CD8-positive, alpha-beta memory T cell (primary cell): ENCODE measurements at regions of chrX and their contacts with region 1.

Region 1: DNA sequence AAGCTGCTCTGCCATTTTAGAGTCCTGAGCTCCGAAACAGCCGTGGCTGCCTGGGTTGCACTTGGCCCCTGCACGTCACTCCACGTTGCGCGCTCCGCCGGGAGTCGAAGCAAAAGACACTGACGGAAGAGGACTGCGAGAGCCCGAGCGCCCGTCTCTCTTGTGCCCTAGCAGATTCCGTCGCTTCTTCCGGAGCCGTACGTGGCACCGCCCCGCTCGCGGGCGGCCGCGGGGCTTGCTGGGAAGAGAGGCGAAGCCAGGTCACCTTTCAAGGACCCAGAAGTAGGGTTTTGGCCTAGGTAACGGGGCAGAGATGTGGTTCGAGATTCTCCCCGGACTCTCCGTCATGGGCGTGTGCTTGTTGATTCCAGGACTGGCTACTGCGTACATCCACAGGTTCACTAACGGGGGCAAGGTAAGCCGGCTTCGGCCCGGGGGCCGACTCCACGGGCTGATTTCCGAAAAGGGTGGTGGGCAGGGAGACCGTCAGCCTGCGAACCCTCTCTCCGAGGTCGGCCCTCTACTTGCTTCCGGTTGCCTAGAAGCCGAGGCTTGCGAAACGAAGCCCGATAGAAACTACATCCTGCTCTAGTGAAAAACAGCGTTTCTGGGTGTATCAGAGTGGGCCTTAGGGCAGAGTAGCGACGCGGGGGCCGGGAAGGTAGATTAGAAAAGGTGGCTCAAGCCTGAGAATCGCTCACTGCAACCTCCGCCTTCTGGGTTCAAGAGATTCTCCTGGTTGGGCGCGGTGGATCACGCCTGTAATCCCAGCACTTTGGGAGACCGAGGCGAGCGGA is at the starts of genes NDUFA1 and RNF113A:
- DNase-seq: peak; percentile 71 to 91 (median 85)
- H3K4me3 ChIP-seq: peak within 1 kb of the TSS; percentile 93
- H3K4me3 Mint-ChIP-seq: peak within 1 kb of the TSS; percentile 97 to 100 (median 99)
- H3K27ac ChIP-seq: peak within 1 kb of the TSS; percentile 95
- H3K27ac Mint-ChIP-seq: peak within 1 kb of the TSS; percentile 98 to 100 (median 99)
- H3K4me1 ChIP-seq: peaks cover 9% of the 10 kb centered on the region
- H3K4me1 Mint-ChIP-seq: peaks cover 26 to 29% (median 28%) of the 10 kb centered on the region in 3 donors
- H3K27me3 ChIP-seq: no peaks in the 10 kb centered on the region
- H3K27me3 Mint-ChIP-seq: peaks cover 0 to 2% of the 10 kb centered on the region in 2 donors
- total RNA-seq, gene NDUFA1: 97.3 to 98.5 TPM
- total RNA-seq, gene RNF113A: 22.9 to 25.1 TPM

Region 2: DNA sequence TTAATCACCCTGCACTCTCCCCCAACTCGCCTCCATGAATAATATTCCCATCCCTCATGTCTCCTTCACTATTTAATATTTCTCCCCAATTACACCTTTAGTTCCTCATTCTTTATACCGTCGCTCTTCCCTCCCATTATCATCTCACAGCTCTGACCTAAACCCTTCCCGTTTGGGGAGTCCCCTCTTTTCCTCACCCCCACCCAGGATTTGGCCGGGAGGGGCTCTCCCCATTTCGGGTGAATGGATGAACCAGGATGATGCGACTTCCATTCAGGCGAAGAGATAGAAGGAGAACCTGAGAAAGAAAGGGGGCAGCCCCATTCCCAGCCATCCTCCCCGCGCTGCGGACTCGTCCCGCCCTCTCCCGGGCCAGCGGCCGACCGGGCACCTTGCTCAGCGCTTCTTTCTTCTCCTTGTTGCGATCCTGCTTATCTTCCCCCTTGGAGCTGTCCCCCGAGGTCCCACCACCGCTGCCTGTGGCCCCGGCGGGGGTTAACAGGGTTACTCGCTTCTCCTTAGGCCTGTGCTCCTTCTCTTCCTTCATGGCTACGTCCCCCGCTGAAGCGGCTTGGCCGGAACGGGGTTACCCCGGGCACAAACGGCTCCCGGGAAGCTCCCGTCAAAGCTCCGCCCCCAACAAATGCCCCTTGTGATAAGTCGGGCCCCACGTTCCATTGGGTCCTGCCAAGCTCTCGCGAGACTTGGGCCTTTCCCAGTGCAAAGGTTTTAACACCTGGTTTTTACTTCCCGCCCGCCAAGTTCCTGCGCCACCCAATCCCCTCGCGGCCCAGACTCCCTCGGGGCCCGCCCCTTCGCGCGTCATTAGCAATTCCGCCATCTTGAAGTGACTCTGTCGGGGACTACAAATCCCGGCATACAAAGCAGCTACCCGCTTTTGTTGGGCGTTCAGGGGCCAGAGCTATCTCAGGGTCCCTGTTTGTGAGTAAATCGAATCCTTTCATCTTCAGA is 19.1 kb before region 1 on chrX and contains the start of gene UPF3B:
- CTCF ChIA-PET with region 1: interaction called, 6 read pairs
- POLR2A ChIA-PET with region 1: interaction called, 29 read pairs
- DNase-seq: peak; percentile 88 to 98 (median 93)
- H3K4me3 ChIP-seq: peak within 1 kb of the TSS; percentile 74
- H3K4me3 Mint-ChIP-seq: peak within 1 kb of the TSS; percentile 97 to 99 (median 99)
- H3K27ac ChIP-seq: peak within 1 kb of the TSS; percentile 91
- H3K27ac Mint-ChIP-seq: peak within 1 kb of the TSS; percentile 85 to 100 (median 98)
- H3K4me1 ChIP-seq: no peaks in the 10 kb centered on the region
- H3K4me1 Mint-ChIP-seq: peaks cover 14 to 37% (median 15%) of the 10 kb centered on the region in 3 donors
- H3K27me3 ChIP-seq: no peaks in the 10 kb centered on the region
- H3K27me3 Mint-ChIP-seq: peaks cover 7 to 10% of the 10 kb centered on the region in 2 donors
- total RNA-seq, gene UPF3B: 19.9 to 22.7 TPM